Heart left ventricle (tissue), 16 donors: ENCODE measurements at regions of chr13 and their contacts with region 1.

Region 1: GRCh38 chr13:53144826-53145225 is 116.2 kb downstream of the OLFM4 start:
- DNase-seq: no peak
- ATAC-seq: no peak
- H3K4me3 ChIP-seq: no peak overlapping the region
- H3K27ac ChIP-seq: no peak overlapping the region
- H3K4me1 ChIP-seq: no peaks in the 10 kb centered on the region
- H3K27me3 ChIP-seq: peaks cover 0 to 20% (median 0%) of the 10 kb centered on the region in 9 donors
- CTCF ChIP-seq: no peak
- POLR2A ChIP-seq: no peak

Region 2: DNA sequence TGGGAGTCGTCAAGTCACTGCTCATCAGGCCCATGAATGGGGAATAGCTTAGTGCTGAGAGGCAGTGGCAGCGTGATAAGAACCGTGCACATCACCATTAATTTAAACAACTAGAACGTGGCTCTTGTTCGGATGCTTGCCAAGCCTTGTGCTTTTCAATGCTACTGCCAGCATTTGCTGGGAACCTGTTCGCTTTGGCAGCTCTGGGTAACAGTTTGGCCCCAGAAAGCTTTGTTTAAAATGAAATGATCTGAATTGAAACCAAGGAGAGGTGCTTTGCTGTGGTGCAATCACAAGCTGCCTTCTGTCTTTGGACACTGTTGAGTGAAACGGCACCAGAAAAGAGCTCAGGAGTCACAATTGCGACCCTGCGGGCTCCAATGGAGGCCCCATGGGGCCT is 169.7 kb before region 1 on chr13:
- intact Hi-C with region 1: loop called in 2 of 10 experiments (anchors 10 kb)
- DNase-seq: no peak
- ATAC-seq: no peak
- H3K4me3 ChIP-seq: no peak overlapping the region
- H3K27ac ChIP-seq: no peak overlapping the region
- H3K4me1 ChIP-seq: no peaks in the 10 kb centered on the region
- H3K27me3 ChIP-seq: peaks cover 0 to 16% (median 0%) of the 10 kb centered on the region in 9 donors
- CTCF ChIP-seq: no peak
- POLR2A ChIP-seq: no peak